Heart right ventricle (tissue), 16 donors: ENCODE measurements at regions of chr17 and their contacts with region 1.

Region 1: GRCh38 chr17:78360371-78361224 is 721 bp upstream of the SOCS3 start:
- DNase-seq: peak; percentile 94 to 97
- ATAC-seq: peak; percentile 63 to 82 (median 76)
- H3K4me3 ChIP-seq: peak overlapping the region; percentile 3 to 94 (median 77)
- H3K27ac ChIP-seq: peak overlapping the region; percentile 57 to 100 (median 96)
- H3K4me1 ChIP-seq: peaks cover 15 to 54% (median 47%) of the 10 kb centered on the region in 9 donors
- H3K27me3 ChIP-seq: no peaks in the 10 kb centered on the region
- CTCF ChIP-seq: peak; percentile 85 to 96 (median 93)

Region 2: GRCh38 chr17:78289802-78290363 is 70.7 kb before region 1 on chr17:
- intact Hi-C with region 1: loop called in 6 of 10 experiments (anchors 2 to 5 kb)
- DNase-seq: peak; percentile 71 to 85
- ATAC-seq: peak; percentile 84 to 95 (median 92)
- H3K4me3 ChIP-seq: no peak overlapping the region
- H3K27ac ChIP-seq: no peak overlapping the region
- H3K4me1 ChIP-seq: peaks cover 0 to 28% (median 8%) of the 10 kb centered on the region in 9 donors
- H3K27me3 ChIP-seq: no peaks in the 10 kb centered on the region
- CTCF ChIP-seq: peak; percentile 61 to 85 (median 76)

Region 3: DNA sequence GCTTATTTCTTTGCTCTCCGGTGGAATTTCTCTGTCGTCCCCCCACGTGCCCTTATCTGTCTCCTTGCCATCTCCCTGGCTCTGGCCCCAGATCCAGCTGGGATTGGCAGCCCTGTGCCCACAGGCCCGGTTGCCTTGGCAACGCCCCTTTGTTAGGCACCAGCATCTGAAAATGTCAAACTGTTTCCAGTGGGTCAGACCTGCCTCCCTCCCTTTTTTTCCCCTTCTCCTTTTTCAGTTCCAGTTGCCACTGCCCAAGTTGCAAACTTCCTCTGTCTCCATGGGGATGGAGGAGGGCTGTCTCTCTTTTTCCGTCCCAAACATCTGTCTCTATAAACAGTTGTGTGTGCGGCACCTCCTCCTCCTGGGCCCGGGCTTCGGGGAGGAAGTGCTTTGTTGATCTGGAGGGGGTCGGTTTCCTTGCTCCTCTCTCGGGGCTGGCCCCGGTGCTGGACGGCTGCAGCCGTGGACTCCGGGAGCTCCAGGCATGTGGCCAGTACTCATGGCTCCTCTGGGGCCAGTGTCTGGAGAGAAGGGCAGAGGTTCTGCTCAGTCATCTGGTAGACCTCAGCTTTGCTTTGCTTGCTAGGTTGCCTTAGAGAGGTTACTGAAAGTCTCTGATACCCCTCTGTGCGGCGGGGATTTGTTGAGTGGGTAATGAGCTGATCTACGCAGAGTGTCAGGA is 36.1 kb before region 1 on chr17:
- intact Hi-C with region 1: loop called in 2 of 10 experiments (anchors 2 to 5 kb)
- DNase-seq: peak; percentile 89 to 96
- ATAC-seq: peak; percentile 73 to 92 (median 90)
- H3K4me3 ChIP-seq: peak overlapping the region in 4 of 10 donors; percentile 10 to 30 (median 20)
- H3K27ac ChIP-seq: peak overlapping the region; percentile 49 to 96 (median 90)
- H3K4me1 ChIP-seq: peaks cover 23 to 58% (median 41%) of the 10 kb centered on the region in 9 donors
- H3K27me3 ChIP-seq: no peaks in the 10 kb centered on the region
- CTCF ChIP-seq: no peak